CD14-positive monocyte (primary cell): ENCODE measurements at regions of chr4 and their contacts with region 1.

Region 1: GRCh38 chr4:11765849-11766453 is 337.3 kb upstream of the HS3ST1 start:
- DNase-seq: peak; percentile 9 to 21 (median 20)
- H3K4me3 ChIP-seq: no peak overlapping the region
- H3K4me3 Mint-ChIP-seq: no peak overlapping the region
- H3K27ac ChIP-seq: no peak overlapping the region
- H3K27ac Mint-ChIP-seq: no peak overlapping the region
- H3K4me1 ChIP-seq: no peaks in the 10 kb centered on the region
- H3K4me1 Mint-ChIP-seq: no peaks in the 10 kb centered on the region
- H3K27me3 ChIP-seq: no peaks in the 10 kb centered on the region
- H3K27me3 Mint-ChIP-seq: peaks cover 1 to 2% (median 1%) of the 10 kb centered on the region in 3 donors
- CTCF ChIP-seq: peak; percentile 90

Region 2: DNA sequence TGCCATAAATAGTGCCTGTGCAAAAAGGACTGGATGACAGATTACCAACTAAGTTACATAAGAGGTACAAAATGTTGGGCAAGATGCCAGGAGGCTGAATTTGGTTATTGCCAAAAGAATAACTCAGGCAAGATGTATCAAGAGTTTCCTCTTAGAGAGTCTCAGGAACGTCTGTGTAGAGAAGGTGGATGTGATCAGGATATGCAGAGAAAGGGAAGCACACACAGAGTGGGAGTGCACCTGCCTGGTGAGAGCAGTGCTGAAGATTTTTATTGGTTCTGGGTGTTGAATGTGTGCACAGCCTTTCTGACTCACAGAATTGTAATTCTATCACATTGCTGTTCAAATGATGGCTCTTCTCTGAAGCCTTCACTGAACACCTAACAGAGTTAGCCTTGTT is 180.4 kb before region 1 on chr4:
- intact Hi-C with region 1: no loop called
- DNase-seq: no peak
- H3K4me3 ChIP-seq: no peak overlapping the region
- H3K4me3 Mint-ChIP-seq: no peak overlapping the region
- H3K27ac ChIP-seq: no peak overlapping the region
- H3K27ac Mint-ChIP-seq: no peak overlapping the region
- H3K4me1 ChIP-seq: no peaks in the 10 kb centered on the region
- H3K4me1 Mint-ChIP-seq: no peaks in the 10 kb centered on the region
- H3K27me3 ChIP-seq: no peaks in the 10 kb centered on the region
- H3K27me3 Mint-ChIP-seq: peaks cover 0 to 3% (median 1%) of the 10 kb centered on the region in 3 donors
- CTCF ChIP-seq: no peak

Region 3: GRCh38 chr4:12633053-12633651 is 867.2 kb after region 1 on chr4:
- intact Hi-C with region 1: loop called in 1 of 2 experiments (anchors 10 kb)
- DNase-seq: peak; percentile 25 to 46 (median 42)
- H3K4me3 ChIP-seq: no peak overlapping the region
- H3K4me3 Mint-ChIP-seq: no peak overlapping the region
- H3K27ac ChIP-seq: no peak overlapping the region
- H3K27ac Mint-ChIP-seq: no peak overlapping the region
- H3K4me1 ChIP-seq: no peaks in the 10 kb centered on the region
- H3K4me1 Mint-ChIP-seq: no peaks in the 10 kb centered on the region
- H3K27me3 ChIP-seq: no peaks in the 10 kb centered on the region
- H3K27me3 Mint-ChIP-seq: peaks cover 1 to 3% (median 1%) of the 10 kb centered on the region in 3 donors
- CTCF ChIP-seq: peak; percentile 89